ENCODE measurements at regions of chr7 and their contacts with region 1.

Region 1: GRCh38 chr7:45136106-45137060 is 21.2 kb upstream of the RAMP3 start:
- DNase-seq: peak; percentile 53
- H3K4me3 ChIP-seq: no peak overlapping the region
- H3K27ac ChIP-seq: no peak overlapping the region
- H3K4me1 ChIP-seq: no peaks in the 10 kb centered on the region
- H3K27me3 ChIP-seq: no peaks in the 10 kb centered on the region
- CTCF ChIP-seq: peak; percentile 86 to 92

Region 2: GRCh38 chr7:44581879-44582603 is 554.3 kb before region 1 on chr7 and contains the start of gene TMED4:
- CTCF ChIA-PET with region 1: no interaction called
- dilution Hi-C with region 1: no loop called
- in situ Hi-C with region 1: loop called (anchors 10 to 25 kb)
- intact Hi-C with region 1: no loop called
- DNase-seq: peak; percentile 97
- H3K4me3 ChIP-seq: peak within 1 kb of the TSS; percentile 62 to 88 (median 72)
- H3K27ac ChIP-seq: peak within 1 kb of the TSS; percentile 76
- H3K4me1 ChIP-seq: peaks cover 12% of the 10 kb centered on the region
- H3K27me3 ChIP-seq: no peaks in the 10 kb centered on the region
- CTCF ChIP-seq: no peak
- total RNA-seq, gene TMED4: 48.2 to 87.9 TPM

Region 3: DNA sequence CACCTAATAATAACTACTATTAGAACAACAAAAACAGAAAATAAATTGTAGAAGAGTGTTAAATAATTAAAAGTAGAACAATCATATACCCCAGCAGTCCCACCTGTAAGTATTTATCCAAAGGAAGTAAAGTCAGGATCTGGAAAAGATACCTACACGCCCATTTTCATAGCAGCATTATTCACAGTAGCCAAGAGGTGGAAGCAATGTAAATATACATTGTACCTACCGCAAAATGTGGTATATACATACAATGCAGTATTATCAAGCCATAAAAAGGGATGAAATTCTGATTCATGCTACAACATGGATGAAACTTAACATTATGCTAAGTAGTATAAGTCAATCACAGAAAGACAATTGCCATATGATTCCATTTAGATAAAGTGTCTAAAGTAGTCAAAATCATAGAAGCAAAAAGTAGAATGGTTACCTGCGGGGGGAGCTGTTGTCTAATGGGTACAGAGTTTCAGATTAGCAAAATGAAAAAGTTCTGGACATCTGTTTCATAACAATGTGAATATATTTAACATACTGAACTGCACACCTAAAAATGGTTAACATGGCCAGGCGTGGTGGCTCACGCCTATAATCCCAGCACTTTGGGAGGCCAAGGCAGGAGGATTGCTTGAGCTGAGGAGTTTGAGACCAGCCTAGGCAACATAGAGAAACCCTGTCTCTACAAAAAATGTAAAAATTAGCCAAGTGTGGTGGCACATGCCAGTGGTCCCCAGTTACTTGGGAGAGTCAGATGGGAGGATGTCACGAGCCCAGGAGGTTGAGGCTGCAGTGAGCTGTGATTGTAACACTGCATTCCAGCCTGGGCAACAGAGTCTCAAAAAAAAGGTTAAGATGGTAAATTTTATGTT is 548.3 kb before region 1 on chr7:
- CTCF ChIA-PET with region 1: no interaction called
- dilution Hi-C with region 1: no loop called
- in situ Hi-C with region 1: loop called (anchors 10 to 25 kb)
- intact Hi-C with region 1: loop called (anchors 1 kb)
- DNase-seq: peak; percentile 51
- H3K4me3 ChIP-seq: no peak overlapping the region
- H3K27ac ChIP-seq: no peak overlapping the region
- H3K4me1 ChIP-seq: peaks cover under 1% of the 10 kb centered on the region
- H3K27me3 ChIP-seq: no peaks in the 10 kb centered on the region
- CTCF ChIP-seq: peak; percentile 54 to 71

Region 4: DNA sequence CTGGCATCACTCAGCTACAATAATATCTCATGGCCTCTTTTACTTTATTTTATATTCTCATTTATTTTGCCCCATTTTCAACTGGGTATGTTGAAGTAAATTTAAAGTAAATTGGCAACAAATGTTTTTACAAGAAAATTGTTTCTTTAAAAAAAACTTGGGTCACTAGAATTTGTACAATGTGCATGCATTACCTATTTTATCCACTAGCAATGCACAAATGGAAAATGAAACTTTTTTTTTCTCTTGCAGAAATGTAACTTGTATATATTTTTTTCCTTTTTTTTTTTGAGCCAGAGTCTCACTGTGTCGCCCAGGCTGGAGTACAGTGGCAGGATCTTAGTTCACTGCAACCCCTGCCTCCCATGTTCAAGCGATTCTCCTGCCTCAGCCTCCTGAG is 278.2 kb before region 1 on chr7:
- CTCF ChIA-PET with region 1: no interaction called
- dilution Hi-C with region 1: no loop called
- in situ Hi-C with region 1: loop called (anchors 10 kb)
- intact Hi-C with region 1: loop called (anchors 1 kb)
- DNase-seq: no peak
- H3K4me3 ChIP-seq: no peak overlapping the region
- H3K27ac ChIP-seq: no peak overlapping the region
- H3K4me1 ChIP-seq: peaks cover 4% of the 10 kb centered on the region
- H3K27me3 ChIP-seq: no peaks in the 10 kb centered on the region
- CTCF ChIP-seq: no peak

Region 5: GRCh38 chr7:44921607-44922359 is 214.6 kb before region 1 on chr7:
- CTCF ChIA-PET with region 1: no interaction called
- dilution Hi-C with region 1: no loop called
- in situ Hi-C with region 1: no loop called
- intact Hi-C with region 1: loop called (anchors 2 kb)
- DNase-seq: peak; percentile 44
- H3K4me3 ChIP-seq: no peak overlapping the region
- H3K27ac ChIP-seq: no peak overlapping the region
- H3K4me1 ChIP-seq: no peaks in the 10 kb centered on the region
- H3K27me3 ChIP-seq: peaks cover 2% of the 10 kb centered on the region
- CTCF ChIP-seq: peak; percentile 73 to 90

Region 6: GRCh38 chr7:44973610-44974401 is 162.6 kb before region 1 on chr7:
- CTCF ChIA-PET with region 1: interaction called, 17 read pairs
- dilution Hi-C with region 1: no loop called
- in situ Hi-C with region 1: no loop called
- intact Hi-C with region 1: loop called (anchors 1 kb)
- DNase-seq: no peak
- H3K4me3 ChIP-seq: no peak overlapping the region
- H3K27ac ChIP-seq: no peak overlapping the region
- H3K4me1 ChIP-seq: no peaks in the 10 kb centered on the region
- H3K27me3 ChIP-seq: no peaks in the 10 kb centered on the region
- CTCF ChIP-seq: peak; percentile 56 to 65

Region 7: DNA sequence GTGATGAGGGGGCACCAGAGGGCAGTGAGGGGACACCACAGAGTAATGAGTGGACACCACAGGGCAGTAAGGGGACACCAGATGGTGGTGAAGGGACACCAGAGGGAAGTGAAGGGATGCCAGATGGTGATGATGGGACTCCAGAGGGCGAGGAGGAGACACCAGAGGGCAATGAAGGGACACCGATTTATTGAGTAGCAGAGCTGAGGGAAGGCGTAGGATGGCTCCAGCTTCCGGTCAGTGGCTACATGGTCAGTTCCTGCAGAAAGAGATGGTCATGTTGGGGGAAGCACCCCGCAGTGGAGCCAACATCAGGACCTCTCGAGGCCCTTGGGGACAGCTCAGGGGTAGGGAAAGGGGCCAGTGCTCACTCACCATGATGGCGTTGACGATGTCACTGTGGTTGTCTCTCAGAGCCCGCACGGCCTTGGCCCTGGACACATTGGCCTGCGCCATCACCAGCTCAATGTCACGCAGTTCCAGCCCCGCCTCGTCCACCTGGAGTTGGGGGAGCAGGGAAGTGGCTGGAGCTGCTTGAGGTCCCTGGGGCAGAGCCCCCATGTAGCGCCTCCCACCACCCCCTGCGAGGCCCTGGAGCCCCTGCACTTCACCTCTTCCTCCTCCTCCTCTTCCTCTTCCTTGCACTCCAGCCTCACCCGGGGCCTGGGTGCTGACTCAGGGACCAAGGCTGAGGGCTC is 56.0 kb before region 1 on chr7:
- CTCF ChIA-PET with region 1: no interaction called
- dilution Hi-C with region 1: no loop called
- in situ Hi-C with region 1: no loop called
- intact Hi-C with region 1: loop called (anchors 2 kb)
- DNase-seq: no peak
- H3K4me3 ChIP-seq: no peak overlapping the region
- H3K27ac ChIP-seq: no peak overlapping the region
- H3K4me1 ChIP-seq: peaks cover 8% of the 10 kb centered on the region
- H3K27me3 ChIP-seq: no peaks in the 10 kb centered on the region
- CTCF ChIP-seq: no peak

Region 8: GRCh38 chr7:45203936-45204445 is 67.6 kb after region 1 on chr7:
- CTCF ChIA-PET with region 1: no interaction called
- dilution Hi-C with region 1: no loop called
- in situ Hi-C with region 1: no loop called
- intact Hi-C with region 1: no loop called
- DNase-seq: peak; percentile 26
- H3K4me3 ChIP-seq: no peak overlapping the region
- H3K27ac ChIP-seq: no peak overlapping the region
- H3K4me1 ChIP-seq: peaks cover 4% of the 10 kb centered on the region
- H3K27me3 ChIP-seq: peaks cover 15% of the 10 kb centered on the region
- CTCF ChIP-seq: no peak

Region 9: DNA sequence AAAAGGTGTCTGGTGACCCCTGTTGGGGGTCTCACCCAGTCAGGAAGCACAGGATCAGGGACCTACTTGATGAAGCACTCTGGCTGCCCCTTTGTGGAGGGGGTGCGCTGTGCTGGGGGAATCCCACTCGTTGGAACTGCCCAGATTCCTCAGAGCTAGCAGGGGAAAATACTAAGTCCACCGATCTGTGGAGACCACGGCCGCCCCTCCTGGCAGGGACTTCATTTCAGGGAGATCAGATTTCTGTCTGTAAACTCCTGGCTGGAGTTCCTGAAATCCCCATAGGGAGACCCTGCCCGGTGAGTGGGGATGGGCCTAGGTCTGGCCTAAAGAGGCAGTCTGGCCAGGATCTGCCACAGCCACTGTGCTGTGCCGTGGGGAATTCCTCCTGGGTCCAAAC is 358.5 kb after region 1 on chr7:
- CTCF ChIA-PET with region 1: no interaction called
- dilution Hi-C with region 1: no loop called
- in situ Hi-C with region 1: no loop called
- intact Hi-C with region 1: no loop called
- DNase-seq: no peak
- H3K4me3 ChIP-seq: no peak overlapping the region
- H3K27ac ChIP-seq: no peak overlapping the region
- H3K4me1 ChIP-seq: no peaks in the 10 kb centered on the region
- H3K27me3 ChIP-seq: peaks cover 3% of the 10 kb centered on the region
- CTCF ChIP-seq: no peak

Measured in mammary epithelial cell (primary cell).